Naive thymus-derived CD4-positive, alpha-beta T cell (primary cell): ENCODE measurements at regions of chr15 and their contacts with region 1.

Region 1: GRCh38 chr15:68875377-68876116 is 54.8 kb upstream of the SPESP1 start:
- DNase-seq: peak; percentile 81 to 92 (median 87)
- ATAC-seq: peak; percentile 83
- H3K4me3 ChIP-seq: no peak overlapping the region
- H3K4me3 Mint-ChIP-seq: peak overlapping the region; percentile 2 to 72 (median 58)
- H3K27ac ChIP-seq: no peak overlapping the region
- H3K27ac Mint-ChIP-seq: no peak overlapping the region
- H3K4me1 ChIP-seq: peaks cover 0 to 4% of the 10 kb centered on the region in 2 donors
- H3K4me1 Mint-ChIP-seq: peaks cover 0 to 7% (median 0%) of the 10 kb centered on the region in 7 donors
- H3K27me3 ChIP-seq: no peaks in the 10 kb centered on the region
- H3K27me3 Mint-ChIP-seq: peaks cover 5 to 53% (median 22%) of the 10 kb centered on the region in 5 donors

Region 2: GRCh38 chr15:68672781-68673205 is 202.8 kb before region 1 on chr15:
- CTCF ChIA-PET with region 1: interaction called, 12 read pairs
- POLR2A ChIA-PET with region 1: no interaction called
- intact Hi-C with region 1: loop called in 1 of 2 experiments (anchors 1 kb)
- DNase-seq: no peak
- ATAC-seq: no peak
- H3K4me3 ChIP-seq: no peak overlapping the region
- H3K4me3 Mint-ChIP-seq: no peak overlapping the region
- H3K27ac ChIP-seq: no peak overlapping the region
- H3K27ac Mint-ChIP-seq: no peak overlapping the region
- H3K4me1 ChIP-seq: no peaks in the 10 kb centered on the region
- H3K4me1 Mint-ChIP-seq: peaks cover 0 to 6% (median 4%) of the 10 kb centered on the region in 7 donors
- H3K27me3 ChIP-seq: no peaks in the 10 kb centered on the region
- H3K27me3 Mint-ChIP-seq: peaks cover 6 to 17% (median 12%) of the 10 kb centered on the region in 5 donors

Region 3: GRCh38 chr15:68730471-68730919 is 145.1 kb before region 1 on chr15:
- CTCF ChIA-PET with region 1: interaction called, 11 read pairs
- POLR2A ChIA-PET with region 1: no interaction called
- intact Hi-C with region 1: loop called in 1 of 2 experiments (anchors 1 kb)
- DNase-seq: peak in 6 of 9 donors; percentile 8 to 40 (median 18)
- ATAC-seq: no peak
- H3K4me3 ChIP-seq: no peak overlapping the region
- H3K4me3 Mint-ChIP-seq: no peak overlapping the region
- H3K27ac ChIP-seq: no peak overlapping the region
- H3K27ac Mint-ChIP-seq: no peak overlapping the region
- H3K4me1 ChIP-seq: no peaks in the 10 kb centered on the region
- H3K4me1 Mint-ChIP-seq: peaks cover 0 to 7% (median 4%) of the 10 kb centered on the region in 7 donors
- H3K27me3 ChIP-seq: no peaks in the 10 kb centered on the region
- H3K27me3 Mint-ChIP-seq: peaks cover 0 to 18% (median 0%) of the 10 kb centered on the region in 5 donors